ENCODE measurements at regions of chr17 and their contacts with region 1.

Region 1: DNA sequence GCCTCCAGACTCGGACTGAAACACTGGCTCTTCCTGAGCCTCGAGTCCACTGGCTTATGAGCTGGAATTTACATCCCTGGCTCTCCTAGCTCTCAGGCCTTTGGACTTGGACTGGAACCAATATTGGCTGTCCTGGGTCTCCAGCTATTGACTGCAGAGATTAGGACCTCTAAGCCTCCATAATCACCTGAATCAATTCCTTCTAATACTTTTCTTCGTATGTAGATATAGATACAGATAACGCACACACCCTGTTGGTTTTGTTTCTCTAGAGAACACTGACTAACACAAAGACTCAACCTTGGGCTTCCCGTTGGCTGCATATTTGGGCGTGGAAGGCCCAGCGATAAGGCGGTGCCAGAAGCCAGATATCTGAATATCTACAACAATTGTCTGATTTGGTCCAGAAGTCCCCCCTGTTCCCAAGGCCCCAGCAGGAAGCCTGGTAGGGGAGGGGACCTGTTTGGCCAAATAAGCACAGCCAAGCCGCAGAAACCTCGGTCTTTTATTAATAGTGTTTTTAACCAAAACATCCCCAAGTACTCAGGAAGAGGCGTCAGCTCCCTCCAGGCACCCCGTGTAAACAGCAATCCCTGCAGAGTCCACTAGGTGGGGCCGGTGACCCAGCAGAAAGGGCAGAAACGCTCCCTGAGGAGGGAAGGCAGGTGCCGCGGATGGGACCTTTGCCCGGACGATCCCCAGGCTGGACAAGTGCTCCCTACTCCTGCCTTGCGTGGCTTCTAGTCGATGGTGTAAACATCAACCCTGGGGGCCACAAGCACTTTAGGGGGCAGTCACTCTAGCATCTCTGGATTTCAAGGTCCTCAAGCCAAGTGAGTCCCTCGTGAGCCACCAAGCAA is 57.0 kb downstream of the ABR start:
- DNase-seq: peak; percentile 85
- H3K4me3 ChIP-seq: no peak overlapping the region
- H3K27ac ChIP-seq: peak overlapping the region; percentile 80
- H3K4me1 ChIP-seq: peaks cover 56% of the 10 kb centered on the region
- H3K27me3 ChIP-seq: no peaks in the 10 kb centered on the region
- CTCF ChIP-seq: peak; percentile 93

Region 2: DNA sequence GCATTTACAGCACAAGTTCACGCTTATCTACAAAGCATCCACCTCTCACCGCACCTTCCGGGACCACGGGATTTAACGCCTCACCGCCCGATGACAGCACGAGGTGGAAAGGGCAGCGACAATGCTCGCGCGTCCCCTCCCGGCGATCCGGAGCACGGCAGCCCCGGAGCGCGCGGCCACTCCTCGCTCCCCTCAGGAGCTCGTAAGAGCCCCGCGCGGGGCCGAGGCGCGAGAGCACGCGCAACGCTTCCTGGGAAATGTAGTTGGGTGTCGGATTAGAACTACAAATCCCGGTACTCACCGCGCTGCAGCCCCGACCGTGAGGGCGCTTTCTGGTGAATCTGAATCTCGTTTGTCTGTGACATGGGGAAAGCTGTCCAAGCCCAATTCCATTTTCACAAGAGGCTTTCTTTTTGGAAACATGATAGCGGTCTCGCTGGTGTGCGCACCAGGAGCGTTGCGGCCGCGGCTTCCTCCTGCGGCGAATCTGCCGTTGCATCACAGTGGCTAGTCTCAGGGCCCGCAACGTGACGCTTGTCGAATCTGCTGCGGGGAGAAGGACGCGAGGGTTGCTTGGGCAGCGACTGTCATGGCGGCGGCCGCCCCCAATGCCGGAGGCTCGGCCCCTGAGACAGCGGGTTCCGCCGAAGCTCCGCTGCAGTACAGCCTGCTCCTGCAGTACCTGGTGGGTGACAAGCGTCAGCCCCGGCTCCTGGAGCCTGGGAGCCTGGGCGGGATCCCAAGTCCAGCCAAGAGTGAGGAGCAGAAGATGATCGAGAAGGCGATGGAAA is 126.0 kb before region 1 on chr17 and contains the start of gene TIMM22:
- intact Hi-C with region 1: no loop called
- DNase-seq: peak; percentile 92
- H3K4me3 ChIP-seq: peak within 1 kb of the TSS; percentile 96
- H3K27ac ChIP-seq: peak within 1 kb of the TSS; percentile 93
- H3K4me1 ChIP-seq: peaks cover 52% of the 10 kb centered on the region
- H3K27me3 ChIP-seq: no peaks in the 10 kb centered on the region
- CTCF ChIP-seq: peak; percentile 97
- total RNA-seq, gene TIMM22: 17.6 TPM

Region 3: DNA sequence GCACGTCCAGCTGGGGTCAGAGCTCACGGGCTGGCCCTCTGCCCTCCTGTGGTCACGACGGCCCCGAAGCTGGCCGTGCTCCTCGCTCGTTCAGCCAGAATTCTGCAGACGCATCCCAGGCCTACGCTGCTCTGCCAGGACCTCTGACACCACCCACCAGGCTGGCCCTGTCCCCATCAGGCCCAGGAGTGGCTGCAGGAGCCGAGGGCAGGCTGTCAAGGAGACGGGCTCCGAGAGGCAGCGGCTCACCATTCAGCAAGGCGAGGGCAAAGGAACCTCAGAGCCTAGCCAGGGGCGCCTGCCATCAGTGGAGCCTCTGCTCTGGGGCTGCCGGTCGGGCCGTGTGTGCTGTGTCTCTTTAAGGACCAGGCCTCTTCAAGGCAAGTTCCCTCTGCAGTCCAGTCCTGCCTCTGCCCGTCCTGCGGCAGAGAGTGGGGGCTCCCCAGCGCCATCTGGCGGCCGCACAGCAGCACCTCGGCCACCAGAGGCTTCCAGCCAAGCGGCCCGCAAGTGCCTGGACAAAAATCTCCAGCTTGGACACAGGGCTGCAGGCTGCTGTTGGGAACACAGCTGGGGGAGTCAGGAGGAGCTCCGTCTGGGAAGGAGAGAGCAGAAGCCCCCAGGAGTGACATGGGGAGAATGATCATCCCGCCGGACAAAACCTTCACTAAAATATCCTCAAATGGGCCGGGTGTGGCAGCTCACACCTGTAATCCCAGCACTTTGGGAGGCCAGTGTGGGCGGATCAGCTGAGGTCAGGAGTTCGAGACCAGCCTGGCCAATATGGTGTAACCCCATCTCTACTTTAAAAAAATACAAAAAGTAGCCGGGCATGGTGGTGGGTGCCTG is 64.4 kb after region 1 on chr17:
- intact Hi-C with region 1: loop called (anchors 2 kb)
- DNase-seq: peak; percentile 86
- H3K4me3 ChIP-seq: peak overlapping the region; percentile 63
- H3K27ac ChIP-seq: peak overlapping the region; percentile 92
- H3K4me1 ChIP-seq: peaks cover 75% of the 10 kb centered on the region
- H3K27me3 ChIP-seq: no peaks in the 10 kb centered on the region
- CTCF ChIP-seq: peak; percentile 99

Measured in left ventricle myocardium inferior (tissue), 1 donor.